PC-3 (cell line): ENCODE measurements at regions of chr17 and their contacts with region 1.

Region 1: DNA sequence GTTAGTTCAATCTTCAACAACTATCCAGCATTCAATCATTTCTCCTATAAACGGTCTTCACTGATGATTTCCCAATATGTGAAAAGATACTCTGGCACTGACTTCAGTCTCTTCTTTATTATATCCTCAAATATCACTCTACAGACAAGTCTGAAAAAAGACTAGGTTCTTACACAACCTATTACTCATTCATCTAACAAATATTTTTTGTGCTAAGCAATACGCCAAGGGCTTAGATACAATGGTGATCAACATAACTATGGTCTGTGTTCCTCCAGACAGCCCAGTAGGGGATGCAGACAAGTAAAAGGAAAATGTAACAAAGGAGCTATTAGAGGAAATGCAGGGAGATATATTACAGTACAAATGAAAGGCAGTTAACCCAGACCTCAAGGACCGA is 63.9 kb downstream of the MYO1D start:
- DNase-seq: peak; percentile 34
- ATAC-seq: no peak; the same call in 1 of the 2 replicates
- H3K4me3 ChIP-seq: no peak overlapping the region
- H3K27ac ChIP-seq: no peak overlapping the region
- H3K4me1 ChIP-seq: peaks cover 23% of the 10 kb centered on the region
- H3K27me3 ChIP-seq: no peaks in the 10 kb centered on the region
- CTCF ChIP-seq: no peak

Region 2: GRCh38 chr17:32523017-32523680 is 289.9 kb before region 1 on chr17:
- CTCF ChIA-PET with region 1: no interaction called
- POLR2A ChIA-PET with region 1: no interaction called
- intact Hi-C with region 1: no loop called
- DNase-seq: no peak
- ATAC-seq: no peak
- H3K4me3 ChIP-seq: no peak overlapping the region
- H3K27ac ChIP-seq: no peak overlapping the region
- H3K4me1 ChIP-seq: peaks cover 6% of the 10 kb centered on the region; the same call in 1 of the 2 replicates
- H3K27me3 ChIP-seq: no peaks in the 10 kb centered on the region
- CTCF ChIP-seq: no peak

Region 3: DNA sequence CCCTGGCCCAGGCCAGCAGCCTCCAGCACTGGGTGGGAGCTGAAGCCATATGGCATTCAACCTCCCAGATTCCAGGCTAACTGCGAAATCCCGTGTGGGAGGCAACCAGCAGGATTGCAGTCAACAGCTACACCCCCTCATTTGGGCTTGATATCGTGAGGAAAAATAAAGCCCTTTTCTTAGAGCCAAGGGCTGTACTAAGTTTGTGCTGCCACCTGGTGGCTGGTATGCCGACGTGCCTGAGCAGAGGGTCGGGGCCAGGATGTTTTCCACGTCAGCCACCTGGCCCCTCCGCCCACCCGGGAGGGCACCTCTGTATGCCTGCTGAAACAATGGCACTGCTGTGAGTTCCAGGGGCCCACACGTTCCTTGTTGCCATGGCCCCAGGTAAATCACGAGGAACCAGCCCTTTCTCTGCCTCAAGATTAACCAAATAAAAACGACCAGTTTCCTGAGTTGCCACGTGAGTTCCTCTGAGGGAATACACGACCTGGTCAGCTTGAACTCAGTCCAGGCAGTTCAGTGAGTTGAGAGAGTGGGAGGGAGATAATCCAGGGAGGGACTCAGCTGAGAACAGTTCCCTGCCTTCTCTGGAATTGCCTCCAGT is 124.0 kb after region 1 on chr17:
- CTCF ChIA-PET with region 1: no interaction called
- POLR2A ChIA-PET with region 1: interaction called, 19 read pairs
- intact Hi-C with region 1: no loop called
- DNase-seq: peak; percentile 70
- ATAC-seq: peak; percentile 68
- H3K4me3 ChIP-seq: no peak overlapping the region
- H3K27ac ChIP-seq: no peak overlapping the region
- H3K4me1 ChIP-seq: peaks cover 15% of the 10 kb centered on the region
- H3K27me3 ChIP-seq: no peaks in the 10 kb centered on the region
- CTCF ChIP-seq: peak; percentile 81